K562 (cell line): ENCODE measurements at regions of chr1 and their contacts with region 1.

Region 1: GRCh38 chr1:156114101-156114916 is at the start of gene LMNA:
- DNase-seq: peak; percentile 90 to 94 (median 92)
- ATAC-seq: peak; percentile 91
- H3K4me3 ChIP-seq: peak within 1 kb of the TSS; percentile 73
- H3K27ac ChIP-seq: peak within 1 kb of the TSS; percentile 92
- H3K4me1 ChIP-seq: peaks cover 24 to 41% of the 10 kb centered on the region in 2 experiments
- H3K27me3 ChIP-seq: no peaks in the 10 kb centered on the region
- CTCF ChIP-seq: 0 out of 6 replicates have a peak, but pooled peaks of 1 of the 3 experiments have one; percentile 5
- EP300 ChIP-seq: 0 out of 2 replicates have a peak, but pooled peaks have one; percentile 25
- POLR2A ChIP-seq: peak; percentile 87
- RAD21 ChIP-seq: no peak
- polyA plus RNA-seq, gene LMNA: 1.00 to 4.5 TPM

Region 2: GRCh38 chr1:156129706-156130581 is 15.6 kb after region 1 on chr1:
- CTCF ChIA-PET with region 1: no interaction called
- POLR2A ChIA-PET with region 1: interaction called, 41 read pairs
- in situ Hi-C with region 1: no loop called
- intact Hi-C with region 1: no loop called
- DNase-seq: peak; percentile 72 to 87 (median 80)
- ATAC-seq: peak; percentile 75
- H3K4me3 ChIP-seq: no peak overlapping the region
- H3K27ac ChIP-seq: peak overlapping the region; percentile 76
- H3K4me1 ChIP-seq: peaks cover 51 to 53% of the 10 kb centered on the region in 2 experiments
- H3K27me3 ChIP-seq: no peaks in the 10 kb centered on the region
- CTCF ChIP-seq: peak; percentile 92 to 96 (median 94)
- EP300 ChIP-seq: no peak
- POLR2A ChIP-seq: no peak
- RAD21 ChIP-seq: peak; percentile 95 to 98